Motor neuron (in vitro differentiated cells): ENCODE measurements at regions of chr4 and their contacts with region 1.

Region 1: DNA sequence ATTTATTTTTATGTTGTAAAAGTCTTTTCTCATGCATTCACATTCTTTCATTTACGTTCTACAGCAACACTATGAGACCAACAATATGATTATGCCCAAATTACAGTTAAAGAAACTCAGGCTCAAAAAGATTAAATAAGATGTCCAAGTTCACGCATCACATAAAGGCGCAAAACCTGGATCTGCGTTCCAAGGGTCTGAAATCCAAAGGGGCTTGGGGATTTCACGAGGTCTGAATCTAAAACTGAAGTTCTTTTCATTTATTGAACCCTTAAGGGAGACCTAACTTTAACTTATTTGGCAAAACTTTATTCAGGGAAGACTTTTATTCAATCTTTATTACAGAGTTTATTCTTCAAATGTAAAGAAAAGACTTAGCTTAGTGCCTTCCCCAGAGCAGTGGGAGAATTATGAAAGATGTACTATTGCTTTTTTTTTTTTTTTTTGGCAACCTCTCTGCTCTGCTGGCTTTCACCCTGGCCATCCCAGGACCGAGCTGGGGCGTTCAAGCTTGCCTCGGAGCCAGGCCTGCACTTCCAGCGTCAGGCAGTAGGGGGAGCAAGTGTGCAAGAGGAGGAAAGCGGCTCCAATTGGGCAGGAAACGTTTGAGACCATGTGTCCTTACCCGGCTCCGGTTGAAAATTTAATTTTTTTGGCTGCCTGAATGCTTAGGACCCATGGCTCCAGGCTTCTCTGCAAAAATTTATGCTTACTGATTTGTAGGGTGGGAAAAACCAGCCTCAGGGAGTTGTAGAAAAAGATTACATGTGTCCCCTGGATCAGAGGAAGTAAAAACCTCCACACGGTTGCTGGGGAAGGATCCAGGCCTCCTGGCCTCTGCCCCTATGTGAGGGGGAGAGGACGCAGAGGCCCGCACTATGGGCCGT is 344.3 kb upstream of the KLF3 start:
- ATAC-seq: peak; percentile 18 to 90 (median 80)
- H3K4me3 ChIP-seq: no peak overlapping the region
- H3K27ac ChIP-seq: no peak overlapping the region
- H3K4me1 ChIP-seq: peaks cover 8 to 12% of the 10 kb centered on the region in 2 donors

Region 2: GRCh38 chr4:38062088-38062893 is 257.4 kb before region 1 on chr4:
- in situ Hi-C with region 1: loop called in 1 of 9 experiments (anchors 25 kb)
- ATAC-seq: peak; percentile 61 to 90 (median 74)
- H3K4me3 ChIP-seq: no peak overlapping the region
- H3K27ac ChIP-seq: no peak overlapping the region
- H3K4me1 ChIP-seq: peaks cover 2 to 8% of the 10 kb centered on the region in 2 donors

Region 3: GRCh38 chr4:38424151-38424871 is 104.6 kb after region 1 on chr4:
- in situ Hi-C with region 1: no loop called
- ATAC-seq: peak in 5 of 8 experiments; percentile 58 to 77 (median 68)
- H3K4me3 ChIP-seq: no peak overlapping the region
- H3K27ac ChIP-seq: no peak overlapping the region
- H3K4me1 ChIP-seq: peaks cover 16 to 30% of the 10 kb centered on the region in 2 donors

Region 4: GRCh38 chr4:38620790-38621684 is 301.3 kb after region 1 on chr4:
- in situ Hi-C with region 1: no loop called
- ATAC-seq: peak in 4 of 8 experiments; percentile 36 to 96 (median 90)
- H3K4me3 ChIP-seq: no peak overlapping the region
- H3K27ac ChIP-seq: no peak overlapping the region
- H3K4me1 ChIP-seq: no peaks in the 10 kb centered on the region

Region 5: DNA sequence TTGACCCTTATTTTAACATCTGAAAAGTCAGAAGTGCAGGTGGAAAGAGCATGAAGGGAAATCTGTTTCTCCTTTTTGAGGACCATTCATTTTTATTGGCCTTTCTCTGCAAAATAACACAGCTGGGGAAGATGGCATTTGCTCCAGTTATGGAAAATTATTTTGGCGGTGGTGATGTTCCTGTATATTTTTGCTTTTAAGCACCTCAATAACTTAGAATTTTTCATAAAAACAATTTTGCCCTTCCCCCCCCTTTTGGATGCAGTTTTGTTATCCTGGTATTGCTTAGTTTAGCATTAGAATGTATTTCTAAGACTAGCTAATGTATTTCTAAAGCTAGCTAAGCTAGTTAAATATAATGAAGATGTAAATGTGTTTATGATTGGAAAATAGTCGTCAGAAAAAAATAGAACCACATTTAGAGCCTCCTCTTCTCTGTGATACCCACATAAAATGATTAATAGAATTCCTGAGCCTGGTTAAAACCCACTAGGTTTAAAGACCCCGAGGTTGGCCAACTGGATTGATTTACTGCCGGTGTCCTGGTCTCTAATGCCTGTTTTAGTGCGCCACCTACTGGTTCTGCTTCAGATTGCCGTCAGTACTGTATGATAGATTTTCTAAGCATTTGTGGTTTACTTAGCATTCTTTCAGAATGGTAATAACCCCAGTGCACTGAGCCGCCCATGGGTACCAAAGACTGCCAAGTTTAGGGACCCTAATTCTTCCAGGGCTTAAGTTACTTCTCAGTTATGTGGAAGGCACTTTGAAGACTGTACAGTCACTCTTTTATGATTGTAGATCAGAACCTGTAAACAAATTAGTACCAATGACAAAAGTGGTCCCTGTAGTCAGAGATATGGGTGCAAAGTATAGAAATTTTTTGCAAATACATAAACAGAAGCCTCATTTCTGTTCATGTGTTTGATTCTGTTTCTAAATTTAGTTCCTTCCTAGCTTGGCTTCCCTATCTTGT is 355.7 kb after region 1 on chr4:
- in situ Hi-C with region 1: loop called in 4 of 9 experiments (anchors 10 to 25 kb)
- ATAC-seq: peak; percentile 2 to 45 (median 37)
- H3K4me3 ChIP-seq: no peak overlapping the region
- H3K27ac ChIP-seq: peak overlapping the region; percentile 5 to 63
- H3K4me1 ChIP-seq: peaks cover 60 to 61% of the 10 kb centered on the region in 2 donors

Region 6: GRCh38 chr4:38730830-38731646 is 411.3 kb after region 1 on chr4:
- in situ Hi-C with region 1: loop called in 1 of 9 experiments (anchors 25 kb)
- ATAC-seq: peak; percentile 3 to 92 (median 68)
- H3K4me3 ChIP-seq: no peak overlapping the region
- H3K27ac ChIP-seq: no peak overlapping the region
- H3K4me1 ChIP-seq: no peaks in the 10 kb centered on the region